ENCODE measurements at regions of chr1 and their contacts with region 1.

Region 1: GRCh38 chr1:93629099-93630059 is 52.3 kb downstream of the BCAR3 start:
- DNase-seq: peak; percentile 69
- H3K4me3 Mint-ChIP-seq: no peak overlapping the region
- H3K27ac Mint-ChIP-seq: no peak overlapping the region
- H3K4me1 Mint-ChIP-seq: no peaks in the 10 kb centered on the region
- H3K27me3 Mint-ChIP-seq: no peaks in the 10 kb centered on the region

Region 2: DNA sequence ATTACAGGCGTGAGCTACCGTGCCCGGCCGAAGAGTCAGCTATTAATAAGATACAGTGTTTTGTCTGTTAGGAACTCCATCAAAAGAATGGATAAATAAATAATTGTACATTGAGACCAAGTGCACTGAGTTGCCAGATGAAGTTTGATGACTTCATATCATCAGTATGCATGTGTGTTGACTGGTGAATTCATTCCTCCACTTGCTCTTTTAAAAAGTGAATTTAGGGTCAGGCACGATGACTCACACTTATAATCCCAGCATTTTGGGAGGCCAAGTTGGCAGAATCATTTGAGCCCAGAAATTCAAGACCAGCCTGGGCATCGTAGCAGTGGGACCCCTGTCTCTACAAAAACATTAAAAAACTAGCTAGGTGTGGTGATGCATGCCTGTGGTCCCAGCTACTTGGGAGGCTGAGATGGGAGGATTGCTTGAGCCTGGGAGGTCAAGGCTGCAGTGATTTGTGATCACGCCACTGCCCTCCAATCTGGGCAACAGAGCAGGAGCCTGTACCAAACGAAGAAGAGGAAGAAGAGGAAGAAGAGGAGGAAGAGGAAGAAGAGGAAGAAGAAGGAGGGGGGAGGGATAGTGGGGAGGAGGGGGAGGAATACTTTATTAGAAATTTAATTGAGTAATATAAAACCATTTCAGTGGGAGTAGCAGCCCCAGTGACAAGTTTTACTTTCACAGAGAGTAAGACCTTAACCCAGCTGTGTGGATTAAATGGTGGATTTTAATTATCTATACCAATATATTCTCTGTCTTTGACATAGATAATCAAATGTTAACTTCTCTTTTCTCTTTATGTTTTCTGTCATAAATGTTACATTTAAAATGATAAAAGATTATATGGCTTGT is 373.9 kb before region 1 on chr1:
- CTCF ChIA-PET with region 1: no interaction called
- intact Hi-C with region 1: no loop called
- DNase-seq: no peak
- H3K4me3 Mint-ChIP-seq: no peak overlapping the region
- H3K27ac Mint-ChIP-seq: no peak overlapping the region
- H3K4me1 Mint-ChIP-seq: peaks cover 4% of the 10 kb centered on the region
- H3K27me3 Mint-ChIP-seq: no peaks in the 10 kb centered on the region

Region 3: DNA sequence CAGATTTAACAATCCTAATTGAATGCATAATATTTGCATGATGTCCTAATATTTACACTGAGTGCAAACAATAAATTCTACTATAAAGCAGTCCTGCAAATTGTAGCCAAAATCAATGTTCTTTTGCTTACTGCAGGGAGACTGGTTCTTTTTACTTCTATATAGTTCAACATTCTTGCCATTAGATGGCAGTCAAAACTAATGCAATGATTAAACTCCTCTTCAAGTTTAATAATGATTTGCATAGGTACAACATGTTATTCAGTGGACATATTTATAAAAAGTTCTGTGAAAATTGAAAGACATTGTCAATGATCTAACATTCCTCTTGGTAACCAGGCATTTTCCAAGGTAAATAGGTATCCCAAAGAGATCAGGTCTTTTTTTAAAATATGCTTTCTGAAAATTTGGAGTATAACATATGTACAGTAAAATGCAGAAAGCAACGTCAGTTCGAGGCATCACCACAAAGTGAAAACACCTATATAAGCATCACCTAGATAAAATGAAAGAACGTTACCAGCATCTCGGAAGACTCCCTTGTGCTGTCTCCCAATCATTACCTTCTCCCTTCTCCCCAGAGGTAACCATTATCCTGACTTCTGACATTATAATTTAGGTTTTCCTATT is 191.3 kb before region 1 on chr1:
- CTCF ChIA-PET with region 1: interaction called, 7 read pairs
- intact Hi-C with region 1: loop called (anchors 1 kb)
- DNase-seq: no peak
- H3K4me3 Mint-ChIP-seq: no peak overlapping the region
- H3K27ac Mint-ChIP-seq: no peak overlapping the region
- H3K4me1 Mint-ChIP-seq: no peaks in the 10 kb centered on the region
- H3K27me3 Mint-ChIP-seq: peaks cover 4% of the 10 kb centered on the region

Region 4: DNA sequence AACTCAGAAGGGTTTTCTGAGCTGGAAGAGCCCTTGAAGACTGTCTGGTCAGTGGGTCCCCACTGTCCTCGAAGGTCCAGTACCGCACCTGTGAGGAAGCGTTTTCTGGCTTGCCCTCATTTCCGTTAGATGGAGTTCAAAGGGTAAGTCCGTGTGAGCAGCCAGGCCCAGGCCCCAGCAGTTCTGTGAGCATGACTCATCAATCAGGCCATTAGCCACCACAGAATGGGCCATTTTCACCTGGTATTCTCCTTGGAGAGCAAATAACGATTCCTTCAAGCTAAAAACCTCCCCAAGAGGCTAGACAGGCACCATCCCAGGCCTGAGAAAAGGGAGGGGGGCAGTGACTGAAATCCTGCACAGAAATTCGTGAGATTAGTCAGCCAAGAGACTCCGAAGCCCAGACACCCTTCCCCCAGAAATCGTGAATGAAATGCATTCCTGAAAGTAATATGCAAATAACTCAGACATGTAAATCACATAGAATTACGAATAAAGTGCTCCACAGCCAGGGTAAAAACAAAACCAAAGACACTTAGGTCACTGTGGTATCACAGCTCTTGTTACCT is 13.7 kb before region 1 on chr1:
- CTCF ChIA-PET with region 1: interaction called, 22 read pairs
- intact Hi-C with region 1: no loop called
- DNase-seq: peak; percentile 76
- H3K4me3 Mint-ChIP-seq: no peak overlapping the region
- H3K27ac Mint-ChIP-seq: no peak overlapping the region
- H3K4me1 Mint-ChIP-seq: peaks cover 17% of the 10 kb centered on the region
- H3K27me3 Mint-ChIP-seq: peaks cover 3% of the 10 kb centered on the region

Region 5: DNA sequence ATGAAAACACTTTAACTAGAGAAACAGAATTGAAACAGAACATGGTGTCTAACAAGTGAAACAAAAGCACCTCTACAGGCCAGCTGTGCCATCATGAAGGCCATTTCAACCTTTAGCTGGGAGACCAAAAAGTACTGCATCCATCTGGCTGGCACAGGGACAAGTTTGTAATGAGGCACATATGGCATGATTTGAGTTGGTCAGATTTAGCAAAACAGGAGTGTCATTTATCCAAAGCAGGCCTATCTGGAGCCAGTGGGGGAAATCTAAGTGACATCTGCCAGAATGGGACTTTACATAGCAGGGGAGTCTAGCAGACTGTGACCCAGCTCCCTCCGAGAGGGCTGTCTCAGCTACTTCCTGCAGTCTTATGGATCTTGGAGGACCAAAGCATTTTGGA is 197.7 kb after region 1 on chr1:
- CTCF ChIA-PET with region 1: interaction called, 11 read pairs
- intact Hi-C with region 1: no loop called
- DNase-seq: no peak
- H3K4me3 Mint-ChIP-seq: no peak overlapping the region
- H3K27ac Mint-ChIP-seq: no peak overlapping the region
- H3K4me1 Mint-ChIP-seq: peaks cover 3% of the 10 kb centered on the region
- H3K27me3 Mint-ChIP-seq: no peaks in the 10 kb centered on the region

Region 6: GRCh38 chr1:94335950-94336349 is 706.6 kb after region 1 on chr1:
- CTCF ChIA-PET with region 1: no interaction called
- intact Hi-C with region 1: loop called (anchors 10 kb)
- DNase-seq: peak; percentile 67
- H3K4me3 Mint-ChIP-seq: no peak overlapping the region
- H3K27ac Mint-ChIP-seq: no peak overlapping the region
- H3K4me1 Mint-ChIP-seq: no peaks in the 10 kb centered on the region
- H3K27me3 Mint-ChIP-seq: peaks cover 4% of the 10 kb centered on the region